BJ (cell line): ENCODE measurements at regions of chr1 and their contacts with region 1.

Region 1: DNA sequence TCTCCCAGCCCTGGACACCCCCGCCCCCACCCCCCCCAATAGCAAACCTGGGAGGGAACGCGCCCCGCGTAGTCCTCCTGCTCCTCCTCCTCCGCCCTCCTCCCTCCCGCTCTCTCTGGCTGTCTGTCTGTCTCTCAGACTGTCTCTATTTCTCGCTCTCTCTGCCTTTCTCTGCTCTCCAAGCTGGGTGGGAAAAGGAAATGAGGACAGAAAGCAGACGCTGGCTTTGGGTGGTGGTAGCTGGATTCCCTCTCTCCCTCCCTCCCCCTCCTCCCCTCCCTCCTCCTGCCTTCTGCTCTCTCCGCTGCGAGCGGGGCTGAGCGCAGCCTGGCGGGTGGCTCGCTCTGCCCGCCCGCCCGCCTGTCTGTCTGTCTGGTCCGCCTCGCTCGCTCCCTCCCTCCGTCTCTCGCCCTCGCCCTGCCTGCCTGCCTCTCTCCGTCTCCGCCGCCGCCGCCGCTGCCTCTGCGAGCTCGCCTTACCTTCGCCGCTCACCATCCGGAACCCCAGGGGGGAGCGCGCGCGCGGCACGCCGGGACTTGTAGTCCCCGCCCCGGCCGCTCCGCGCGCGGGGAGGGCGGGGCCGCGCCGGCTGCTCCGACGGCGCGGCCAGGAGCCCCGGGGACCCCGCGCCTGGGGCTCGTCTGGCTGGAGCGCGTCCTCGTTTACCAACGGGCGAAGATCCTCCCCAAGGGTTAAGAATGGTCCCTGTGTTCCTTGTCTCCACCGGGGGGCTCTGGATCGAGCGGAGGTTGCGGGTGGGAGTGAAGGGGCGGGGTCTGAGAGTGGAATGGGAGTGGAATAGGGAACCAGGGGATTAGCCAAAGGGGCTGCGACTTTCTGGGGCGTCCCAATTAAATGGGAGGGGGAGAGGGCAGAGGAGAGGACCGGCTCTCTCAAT is at the start of gene AHDC1:
- DNase-seq: no peak
- H3K4me3 ChIP-seq: peak within 1 kb of the TSS; percentile 82
- H3K27me3 ChIP-seq: no peaks in the 10 kb centered on the region
- CTCF ChIP-seq: peak; percentile 18; the same call in 1 of the 2 replicates
- polyA plus RNA-seq, gene AHDC1: 3.5 and 4.1 TPM in 2 replicates

Region 2: GRCh38 chr1:27416387-27417111 is 187.4 kb before region 1 on chr1:
- CTCF ChIA-PET with region 1: interaction called, 31 read pairs
- POLR2A ChIA-PET with region 1: no interaction called
- DNase-seq: no peak
- H3K4me3 ChIP-seq: no peak overlapping the region
- H3K27me3 ChIP-seq: no peaks in the 10 kb centered on the region
- CTCF ChIP-seq: peak; percentile 80

Region 3: DNA sequence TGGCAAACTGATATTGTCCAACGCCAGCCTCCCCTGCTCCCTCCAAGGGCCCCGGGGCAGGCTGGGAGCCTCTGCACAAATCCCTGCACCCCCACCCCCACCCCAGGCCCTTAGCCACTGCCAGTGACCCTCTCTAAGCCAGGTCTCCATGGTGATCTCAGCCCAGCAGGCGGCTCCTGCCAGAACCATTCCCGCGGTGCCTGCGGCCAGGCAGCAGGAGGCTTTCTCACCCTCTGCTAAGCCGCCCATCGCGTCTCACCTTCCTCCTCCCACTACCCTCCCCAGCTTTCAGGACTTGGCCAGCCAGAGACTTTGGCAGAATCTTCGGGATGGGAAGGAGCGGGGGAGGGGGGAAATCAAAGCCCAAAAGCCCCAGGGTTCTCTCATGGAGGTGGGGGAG is 67.2 kb before region 1 on chr1:
- CTCF ChIA-PET with region 1: interaction called, 11 read pairs
- POLR2A ChIA-PET with region 1: no interaction called
- DNase-seq: no peak
- H3K4me3 ChIP-seq: no peak overlapping the region
- H3K27me3 ChIP-seq: no peaks in the 10 kb centered on the region
- CTCF ChIP-seq: peak; percentile 30

Region 4: GRCh38 chr1:27616441-27616840 is 12.5 kb after region 1 on chr1:
- CTCF ChIA-PET with region 1: interaction called, 39 read pairs
- POLR2A ChIA-PET with region 1: no interaction called
- DNase-seq: no peak
- H3K4me3 ChIP-seq: no peak overlapping the region
- H3K27me3 ChIP-seq: peaks cover 2% of the 10 kb centered on the region; the same call in 1 of the 2 replicates
- CTCF ChIP-seq: no peak

Region 5: GRCh38 chr1:27671964-27672749 is 68.2 kb after region 1 on chr1 and contains the start of gene IFI6:
- CTCF ChIA-PET with region 1: interaction called, 223 read pairs
- POLR2A ChIA-PET with region 1: no interaction called
- DNase-seq: peak; percentile 92
- H3K4me3 ChIP-seq: peak within 1 kb of the TSS; percentile 50
- H3K27me3 ChIP-seq: no peaks in the 10 kb centered on the region
- CTCF ChIP-seq: peak; percentile 41
- polyA plus RNA-seq, gene IFI6: 68.0 and 75.7 TPM in 2 replicates